ENCODE measurements at regions of chrX and their contacts with region 1.

Region 1: GRCh38 chrX:47384502-47384901 is 14.1 kb downstream of the ZNF157 start:
- DNase-seq: peak; percentile 73
- H3K4me3 Mint-ChIP-seq: no peak overlapping the region
- H3K27ac Mint-ChIP-seq: no peak overlapping the region
- H3K4me1 Mint-ChIP-seq: peaks cover 7% of the 10 kb centered on the region
- H3K27me3 Mint-ChIP-seq: no peaks in the 10 kb centered on the region

Region 2: GRCh38 chrX:47217642-47218279 is 166.7 kb before region 1 on chrX:
- CTCF ChIA-PET with region 1: interaction called, 6 read pairs
- POLR2A ChIA-PET with region 1: no interaction called
- intact Hi-C with region 1: loop called (anchors 2 kb)
- DNase-seq: peak; percentile 97
- H3K4me3 Mint-ChIP-seq: peak overlapping the region; percentile 87
- H3K27ac Mint-ChIP-seq: peak overlapping the region; percentile 97
- H3K4me1 Mint-ChIP-seq: peaks cover 32% of the 10 kb centered on the region
- H3K27me3 Mint-ChIP-seq: no peaks in the 10 kb centered on the region

Region 3: GRCh38 chrX:47278691-47279090 is 105.8 kb before region 1 on chrX:
- CTCF ChIA-PET with region 1: no interaction called
- POLR2A ChIA-PET with region 1: no interaction called
- intact Hi-C with region 1: no loop called
- DNase-seq: no peak
- H3K4me3 Mint-ChIP-seq: no peak overlapping the region
- H3K27ac Mint-ChIP-seq: no peak overlapping the region
- H3K4me1 Mint-ChIP-seq: no peaks in the 10 kb centered on the region
- H3K27me3 Mint-ChIP-seq: no peaks in the 10 kb centered on the region

Region 4: GRCh38 chrX:47311932-47312774 is 72.3 kb before region 1 on chrX:
- CTCF ChIA-PET with region 1: interaction called, 10 read pairs
- POLR2A ChIA-PET with region 1: no interaction called
- intact Hi-C with region 1: loop called (anchors 10 kb)
- DNase-seq: peak; percentile 73
- H3K4me3 Mint-ChIP-seq: no peak overlapping the region
- H3K27ac Mint-ChIP-seq: no peak overlapping the region
- H3K4me1 Mint-ChIP-seq: no peaks in the 10 kb centered on the region
- H3K27me3 Mint-ChIP-seq: no peaks in the 10 kb centered on the region

Region 5: DNA sequence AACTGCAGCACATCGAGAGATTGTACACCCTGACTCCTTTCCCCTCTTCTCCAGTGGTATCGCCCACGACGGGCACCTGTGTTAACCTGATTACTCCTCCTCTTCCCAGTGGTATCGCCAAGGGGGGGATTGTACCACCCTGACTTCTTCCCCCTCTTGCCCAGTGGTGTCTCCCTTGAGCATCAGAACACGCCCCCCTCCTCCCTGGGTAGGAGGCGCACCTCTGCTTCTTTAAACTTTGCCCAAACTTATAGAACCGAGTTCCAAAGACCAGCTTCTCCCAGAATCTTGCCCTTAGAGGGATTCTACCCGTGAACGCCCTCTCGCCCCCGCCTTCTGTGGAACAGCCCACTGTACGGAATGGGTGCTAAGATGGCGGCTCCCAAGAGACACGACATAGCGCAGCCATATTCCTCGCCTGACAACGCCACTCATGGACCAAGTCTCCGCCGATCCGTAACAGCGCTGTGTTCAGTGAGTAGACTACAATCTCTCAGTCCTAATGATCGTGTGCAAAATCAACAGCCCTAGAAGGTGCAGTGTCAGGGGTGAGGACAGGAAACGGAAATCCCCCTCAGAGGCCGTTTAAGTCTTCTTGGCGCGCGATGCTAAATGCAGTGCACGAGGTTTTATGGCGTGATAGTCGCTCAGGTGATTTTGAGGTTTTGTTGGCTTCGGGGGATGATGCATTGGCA is 18.3 kb before region 1 on chrX:
- CTCF ChIA-PET with region 1: interaction called, 3 read pairs
- POLR2A ChIA-PET with region 1: no interaction called
- intact Hi-C with region 1: loop called (anchors 2 kb)
- DNase-seq: peak; percentile 80
- H3K4me3 Mint-ChIP-seq: peak overlapping the region; percentile 83
- H3K27ac Mint-ChIP-seq: peak overlapping the region; percentile 81
- H3K4me1 Mint-ChIP-seq: peaks cover 13% of the 10 kb centered on the region
- H3K27me3 Mint-ChIP-seq: no peaks in the 10 kb centered on the region

Region 6: GRCh38 chrX:47482512-47483309 is 98.2 kb after region 1 on chrX and contains the start of gene ZNF41:
- CTCF ChIA-PET with region 1: no interaction called
- POLR2A ChIA-PET with region 1: no interaction called
- intact Hi-C with region 1: loop called (anchors 10 kb)
- DNase-seq: peak; percentile 80
- H3K4me3 Mint-ChIP-seq: peak within 1 kb of the TSS; percentile 86
- H3K27ac Mint-ChIP-seq: peak within 1 kb of the TSS; percentile 95
- H3K4me1 Mint-ChIP-seq: peaks cover 29% of the 10 kb centered on the region
- H3K27me3 Mint-ChIP-seq: no peaks in the 10 kb centered on the region
- total RNA-seq, gene ZNF41: 8.4 to 8.7 TPM

Region 7: DNA sequence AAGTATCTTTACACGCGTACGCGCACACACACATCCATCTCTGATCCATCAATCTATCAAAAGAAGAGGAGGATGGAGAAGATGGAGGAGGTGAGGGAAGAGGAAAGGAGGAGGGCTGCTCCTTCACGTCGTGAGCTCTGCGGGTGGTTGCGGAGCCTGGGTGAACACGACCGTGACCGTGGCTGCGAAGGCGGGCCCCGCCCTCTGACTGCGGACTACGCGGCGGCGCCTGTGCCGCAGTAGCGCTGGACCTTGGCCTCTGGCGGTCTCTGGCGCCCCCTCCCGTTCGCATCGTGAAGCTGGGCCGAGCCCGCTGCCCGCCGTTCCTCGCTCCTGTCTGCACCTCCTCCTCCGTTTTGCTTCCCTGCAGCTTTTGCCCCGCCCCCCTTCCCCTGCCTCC is 138.8 kb after region 1 on chrX:
- CTCF ChIA-PET with region 1: interaction called, 23 read pairs
- POLR2A ChIA-PET with region 1: no interaction called
- intact Hi-C with region 1: loop called (anchors 5 kb)
- DNase-seq: peak; percentile 86
- H3K4me3 Mint-ChIP-seq: peak overlapping the region; percentile 60
- H3K27ac Mint-ChIP-seq: no peak overlapping the region
- H3K4me1 Mint-ChIP-seq: no peaks in the 10 kb centered on the region
- H3K27me3 Mint-ChIP-seq: no peaks in the 10 kb centered on the region

Measured in activated CD4-positive, alpha-beta memory T cell treated with anti-CD3 and anti-CD28 coated beads for 36 hours (primary cell).